Naive thymus-derived CD8-positive, alpha-beta T cell (primary cell): ENCODE measurements at regions of chr13 and their contacts with region 1.

Region 1: DNA sequence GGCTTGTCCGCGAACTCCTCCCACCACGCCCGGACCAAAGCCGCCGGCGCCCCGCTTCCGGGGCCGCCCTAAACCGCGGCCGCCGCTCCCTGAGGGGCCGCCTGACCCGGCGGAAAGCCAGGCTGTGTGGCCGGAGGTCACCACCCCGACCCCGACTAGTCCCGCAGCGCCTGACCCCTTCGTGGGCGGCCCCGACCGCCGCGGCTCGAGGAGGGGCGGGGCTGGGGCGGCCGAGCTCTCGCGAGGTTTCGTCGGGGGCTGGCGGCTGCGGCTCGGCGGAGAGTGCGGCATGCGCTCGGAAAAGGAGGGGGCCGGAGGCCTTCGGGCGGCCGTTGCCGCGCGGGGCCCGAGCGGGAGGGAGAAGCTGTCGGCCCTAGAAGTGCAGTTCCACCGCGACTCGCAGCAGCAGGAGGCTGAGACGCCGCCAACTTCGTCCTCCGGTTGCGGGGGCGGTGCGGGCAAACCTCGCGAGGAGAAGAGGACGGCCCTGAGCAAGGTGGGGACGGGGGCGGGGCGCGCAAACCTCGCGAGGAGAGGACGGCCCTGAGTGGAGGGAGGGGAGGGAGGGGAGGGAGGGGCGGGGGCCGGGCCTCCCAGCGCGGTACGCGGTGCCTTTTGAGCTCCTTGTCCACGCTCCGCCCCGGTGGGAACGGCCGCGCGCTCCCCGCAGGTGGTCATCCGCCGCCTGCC is at the start of gene UPF3A:
- DNase-seq: peak; percentile 74 to 98 (median 86)
- ATAC-seq: peak; percentile 77 to 83
- H3K4me3 Mint-ChIP-seq: peak within 1 kb of the TSS; percentile 87 to 96 (median 92)
- H3K27ac Mint-ChIP-seq: peak within 1 kb of the TSS; percentile 95 to 98 (median 96)
- H3K4me1 Mint-ChIP-seq: peaks cover 22 to 48% (median 38%) of the 10 kb centered on the region in 4 donors
- H3K27me3 Mint-ChIP-seq: no peaks in the 10 kb centered on the region
- polyA plus RNA-seq, gene UPF3A: 17.7 to 35.4 (median 20.9) TPM

Region 2: GRCh38 chr13:114234645-114235421 is 46.7 kb before region 1 on chr13 and contains the start of gene CDC16:
- POLR2A ChIA-PET with region 1: interaction called, 12 read pairs
- DNase-seq: peak; percentile 47 to 88 (median 74)
- ATAC-seq: peak; percentile 87
- H3K4me3 Mint-ChIP-seq: peak within 1 kb of the TSS; percentile 81 to 92 (median 90)
- H3K27ac Mint-ChIP-seq: peak within 1 kb of the TSS; percentile 79 to 95 (median 90)
- H3K4me1 Mint-ChIP-seq: peaks cover 17 to 32% (median 26%) of the 10 kb centered on the region in 4 donors
- H3K27me3 Mint-ChIP-seq: peaks cover 0 to 7% (median 4%) of the 10 kb centered on the region in 5 donors
- polyA plus RNA-seq, gene CDC16: 12.9 to 19.6 (median 15.4) TPM

Region 3: GRCh38 chr13:114249077-114249476 is 32.4 kb before region 1 on chr13:
- POLR2A ChIA-PET with region 1: no interaction called
- DNase-seq: no peak
- ATAC-seq: no peak
- H3K4me3 Mint-ChIP-seq: no peak overlapping the region
- H3K27ac Mint-ChIP-seq: no peak overlapping the region
- H3K4me1 Mint-ChIP-seq: peaks cover 2 to 9% (median 5%) of the 10 kb centered on the region in 4 donors
- H3K27me3 Mint-ChIP-seq: no peaks in the 10 kb centered on the region

Region 4: DNA sequence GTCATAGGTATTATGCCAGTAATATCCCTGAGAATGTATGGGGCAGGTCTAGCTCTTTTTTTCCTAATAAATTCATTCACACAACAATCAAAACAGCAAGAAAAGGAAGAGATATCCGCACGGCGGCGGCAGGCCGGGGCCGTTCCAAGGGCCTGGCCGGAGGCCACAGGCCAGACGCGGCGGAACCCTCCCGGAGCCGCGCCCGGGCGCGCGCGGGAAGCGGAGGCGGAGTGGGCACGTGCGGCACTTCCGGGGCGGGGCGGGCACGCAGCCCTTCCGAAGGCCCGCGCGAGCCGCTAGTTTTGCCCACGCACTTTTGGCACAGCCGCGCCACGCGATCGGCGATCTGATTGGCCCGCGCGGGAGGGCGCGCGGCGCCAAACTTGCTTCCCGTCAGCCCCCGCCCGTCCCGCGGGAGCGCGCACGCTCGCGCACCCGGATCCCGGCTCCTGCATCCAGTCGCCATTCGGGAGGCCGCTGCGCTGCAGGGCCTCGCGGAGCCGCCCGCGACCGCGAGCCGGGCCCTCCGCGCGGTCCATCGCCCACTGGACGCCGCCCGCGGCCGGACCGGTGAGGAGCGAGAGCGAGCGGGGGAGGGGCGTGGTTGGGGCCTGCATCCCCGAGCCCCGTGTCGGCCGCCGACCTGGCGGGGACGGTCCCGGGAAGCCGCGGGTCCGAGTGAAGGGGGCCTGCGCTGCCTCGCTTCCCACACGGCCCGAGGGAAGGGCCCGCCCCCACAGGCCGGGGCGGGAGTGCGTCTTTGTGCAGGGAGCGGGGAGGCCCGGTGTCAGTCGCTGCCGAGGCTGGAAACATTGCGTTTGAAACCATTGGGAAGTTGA is 32.8 kb after region 1 on chr13 and contains the start of gene CHAMP1:
- POLR2A ChIA-PET with region 1: interaction called, 14 read pairs
- DNase-seq: peak; percentile 80 to 93 (median 86)
- ATAC-seq: peak; percentile 89 to 92
- H3K4me3 Mint-ChIP-seq: peak within 1 kb of the TSS; percentile 81 to 96 (median 90)
- H3K27ac Mint-ChIP-seq: peak within 1 kb of the TSS; percentile 88 to 96 (median 91)
- H3K4me1 Mint-ChIP-seq: peaks cover 23 to 53% (median 49%) of the 10 kb centered on the region in 4 donors
- H3K27me3 Mint-ChIP-seq: no peaks in the 10 kb centered on the region
- polyA plus RNA-seq, gene CHAMP1: 4.4 to 7.5 (median 5.5) TPM